IMR-90 (cell line): ENCODE measurements at regions of chr18 and their contacts with region 1.

Region 1: DNA sequence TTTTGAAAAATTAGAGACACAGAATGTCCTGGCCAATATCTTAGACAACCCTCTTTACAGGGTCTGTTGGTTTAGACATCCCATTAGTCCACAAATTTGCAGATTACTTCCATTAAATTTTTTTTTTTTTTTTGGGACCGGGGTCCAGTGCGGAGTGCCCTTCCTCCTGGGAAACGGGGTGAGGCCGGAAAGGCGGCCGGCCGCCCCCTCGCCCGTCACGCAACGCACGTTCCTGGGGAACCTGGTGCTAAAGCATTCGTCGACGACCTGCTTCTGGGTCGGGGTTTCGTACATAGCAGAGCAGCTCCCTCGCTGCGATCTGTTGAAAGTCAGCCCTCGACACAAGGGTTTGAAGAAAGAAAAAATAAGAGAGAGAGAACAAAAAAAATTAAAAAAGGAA is 21.5 kb upstream of the RBFA start:
- DNase-seq: no peak
- ATAC-seq: no peak
- H3K4me3 ChIP-seq: no peak overlapping the region
- H3K27ac ChIP-seq: no peak overlapping the region
- H3K4me1 ChIP-seq: peaks cover 7% of the 10 kb centered on the region
- H3K27me3 ChIP-seq: no peaks in the 10 kb centered on the region
- CTCF ChIP-seq: no peak
- POLR2A ChIP-seq: no peak
- RAD21 ChIP-seq: no peak

Region 2: DNA sequence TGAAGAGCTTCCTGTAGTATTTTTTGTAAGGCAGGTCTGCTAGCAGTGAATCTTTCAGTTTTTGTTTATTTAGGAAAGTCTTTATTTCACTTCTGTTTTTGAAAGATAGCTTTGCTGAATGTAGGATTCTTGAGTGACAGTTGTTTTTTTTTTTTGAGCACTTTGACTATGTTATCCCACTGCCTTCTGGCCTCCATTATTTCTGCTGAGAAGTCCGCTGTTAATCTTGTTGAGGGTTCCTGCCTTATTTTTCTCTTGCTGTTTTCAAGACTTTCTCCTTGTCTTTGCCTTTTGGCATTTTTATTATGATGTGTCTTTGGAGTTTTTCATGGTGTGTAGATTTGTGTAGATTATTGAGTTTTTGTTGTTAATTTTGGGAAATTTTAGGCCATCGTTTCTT is 43.4 kb after region 1 on chr18:
- CTCF ChIA-PET with region 1: no interaction called
- POLR2A ChIA-PET with region 1: interaction called, 13 read pairs
- dilution Hi-C with region 1: no loop called
- in situ Hi-C with region 1: no loop called
- intact Hi-C with region 1: no loop called
- DNase-seq: no peak
- ATAC-seq: no peak
- H3K4me3 ChIP-seq: no peak overlapping the region
- H3K27ac ChIP-seq: no peak overlapping the region
- H3K4me1 ChIP-seq: no peaks in the 10 kb centered on the region
- H3K27me3 ChIP-seq: no peaks in the 10 kb centered on the region
- CTCF ChIP-seq: no peak
- POLR2A ChIP-seq: no peak
- RAD21 ChIP-seq: no peak